ENCODE measurements at regions of chr9 and their contacts with region 1.

Region 1: GRCh38 chr9:68999393-69000105 is 14.4 kb downstream of the PRKACG start:
- DNase-seq: peak; percentile 27 to 48
- ATAC-seq: peak; percentile 66 to 92
- H3K4me3 ChIP-seq: no peak overlapping the region
- H3K27ac ChIP-seq: no peak overlapping the region
- H3K4me1 ChIP-seq: no peaks in the 10 kb centered on the region
- H3K27me3 ChIP-seq: no peaks in the 10 kb centered on the region
- CTCF ChIP-seq: peak in 4 of 5 experiments; percentile 44 to 79 (median 62)
- POLR2A ChIP-seq: no peak

Region 2: GRCh38 chr9:68577774-68578591 is 421.6 kb before region 1 on chr9:
- in situ Hi-C with region 1: loop called (anchors 5 to 10 kb)
- intact Hi-C with region 1: no loop called
- DNase-seq: no peak
- ATAC-seq: no peak
- H3K4me3 ChIP-seq: no peak overlapping the region
- H3K27ac ChIP-seq: no peak overlapping the region
- H3K4me1 ChIP-seq: no peaks in the 10 kb centered on the region
- H3K27me3 ChIP-seq: no peaks in the 10 kb centered on the region
- CTCF ChIP-seq: no peak
- POLR2A ChIP-seq: no peak

Region 3: DNA sequence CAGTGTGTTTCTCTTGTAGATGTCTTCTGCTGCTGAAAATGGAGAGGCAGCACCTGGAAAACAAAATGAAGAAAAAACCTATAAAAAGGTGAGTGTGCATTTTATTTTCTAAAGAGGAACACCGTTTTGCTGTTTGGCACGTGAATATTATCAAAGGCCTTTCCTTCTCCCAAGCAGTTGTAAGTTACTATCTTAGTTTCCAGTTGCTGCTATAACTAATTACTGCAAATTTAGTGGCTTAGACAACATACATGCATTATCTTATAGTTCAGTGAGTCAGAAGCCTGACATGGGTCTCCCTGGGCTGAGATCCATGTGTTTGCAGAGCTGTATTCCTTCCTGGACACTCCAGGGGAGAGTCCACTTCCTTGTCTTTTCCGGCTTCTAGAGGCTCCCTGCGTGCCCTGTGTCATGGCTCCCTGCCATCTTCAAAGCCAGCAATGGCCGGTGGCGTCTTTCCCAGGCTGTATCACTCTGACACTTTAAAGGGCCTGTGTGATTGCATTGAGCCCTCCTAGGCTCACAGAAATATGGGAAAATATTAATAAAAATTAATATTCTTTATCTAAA is 176.9 kb before region 1 on chr9:
- in situ Hi-C with region 1: no loop called
- intact Hi-C with region 1: no loop called
- DNase-seq: peak in 1 of 2 donors; percentile 59
- ATAC-seq: peak; percentile 56 to 89
- H3K4me3 ChIP-seq: no peak overlapping the region
- H3K27ac ChIP-seq: peak overlapping the region in 2 of 4 donors; percentile 23 to 65
- H3K4me1 ChIP-seq: peaks cover 9 to 10% of the 10 kb centered on the region in 2 donors
- H3K27me3 ChIP-seq: no peaks in the 10 kb centered on the region
- CTCF ChIP-seq: no peak
- POLR2A ChIP-seq: no peak

Region 4: DNA sequence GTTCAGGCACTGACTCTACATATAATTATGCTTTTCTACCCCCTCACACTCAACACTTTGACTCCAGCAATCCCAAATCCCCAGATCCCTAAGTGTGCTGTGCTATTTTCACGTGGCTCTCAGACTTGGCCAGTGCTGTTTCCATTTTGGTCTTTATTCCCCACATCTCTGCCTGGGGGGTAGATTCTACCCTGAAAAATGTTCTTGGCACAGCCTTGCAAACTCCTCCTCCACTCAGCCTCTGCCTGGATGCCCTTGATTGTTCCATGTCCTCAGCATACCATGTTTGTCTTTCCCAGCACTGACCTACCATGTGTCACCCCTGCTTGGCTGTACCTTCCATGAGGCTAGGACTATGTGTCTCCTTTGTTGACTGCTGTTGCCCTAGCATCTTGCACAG is 79.0 kb after region 1 on chr9:
- in situ Hi-C with region 1: no loop called
- intact Hi-C with region 1: no loop called
- DNase-seq: peak; percentile 6 to 19
- ATAC-seq: peak; percentile 18 to 54
- H3K4me3 ChIP-seq: no peak overlapping the region
- H3K27ac ChIP-seq: no peak overlapping the region
- H3K4me1 ChIP-seq: no peaks in the 10 kb centered on the region
- H3K27me3 ChIP-seq: no peaks in the 10 kb centered on the region
- CTCF ChIP-seq: no peak
- POLR2A ChIP-seq: no peak

Region 5: GRCh38 chr9:69622676-69623075 is 623.1 kb after region 1 on chr9:
- in situ Hi-C with region 1: no loop called
- intact Hi-C with region 1: no loop called
- DNase-seq: no peak
- ATAC-seq: no peak
- H3K4me3 ChIP-seq: no peak overlapping the region
- H3K27ac ChIP-seq: no peak overlapping the region
- H3K4me1 ChIP-seq: peaks cover 0 to 3% of the 10 kb centered on the region in 2 donors
- H3K27me3 ChIP-seq: no peaks in the 10 kb centered on the region
- CTCF ChIP-seq: no peak
- POLR2A ChIP-seq: no peak

Measured in gastrocnemius medialis (tissue), 4 donors.